ENCODE measurements at regions of chr11 and their contacts with region 1.

Region 1: DNA sequence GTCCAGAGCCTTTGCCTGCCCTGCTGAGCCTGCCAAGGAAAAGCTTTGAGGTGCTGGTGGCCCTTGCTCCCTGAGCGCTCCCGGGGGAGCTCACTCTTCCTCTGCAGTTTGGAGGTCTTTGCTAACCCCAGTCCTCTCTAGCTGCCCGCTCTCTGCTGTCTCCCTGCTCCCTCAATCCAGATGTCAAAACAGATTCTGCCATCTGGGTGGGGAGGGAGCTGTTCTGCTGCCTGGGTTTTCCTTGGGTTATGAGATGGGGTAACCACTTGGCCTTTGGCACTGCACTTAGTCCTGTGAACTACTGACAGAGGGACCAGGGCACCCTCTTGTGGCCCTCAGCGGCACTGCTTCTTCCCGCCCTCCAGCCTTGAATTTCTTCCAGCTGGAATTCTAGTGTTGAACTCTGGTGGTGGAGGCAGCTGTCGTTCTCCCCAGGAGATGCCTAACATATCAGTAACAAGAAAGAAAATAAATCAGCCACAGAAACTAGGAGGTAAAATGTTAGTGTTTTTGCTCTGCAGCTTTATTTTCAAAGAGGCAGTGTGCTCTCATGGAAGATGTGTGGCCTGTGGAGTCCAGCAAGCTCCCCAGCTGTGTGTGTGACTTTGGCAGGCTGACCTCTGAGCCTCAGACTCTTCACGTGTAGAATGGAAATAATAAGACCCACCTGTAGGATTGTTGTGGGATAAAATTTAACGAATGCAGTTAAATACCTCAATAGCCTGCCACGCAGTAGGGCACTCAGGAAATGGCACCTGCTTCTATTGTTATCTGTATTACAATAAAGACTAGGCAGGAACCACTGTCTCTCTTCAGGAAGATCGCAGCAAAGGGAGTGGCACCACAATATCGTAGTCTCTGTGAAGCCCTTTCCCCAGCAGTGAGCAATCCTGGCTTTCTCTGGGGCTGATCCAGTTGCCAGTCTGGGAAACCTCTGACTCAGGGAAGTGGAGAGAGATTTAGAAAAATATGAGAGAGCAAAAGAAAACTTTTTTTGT is 23.4 kb downstream of the ARFGAP2 start:
- DNase-seq: peak; percentile 34 to 64 (median 52)
- ATAC-seq: peak; percentile 80
- H3K4me3 ChIP-seq: peak overlapping the region; percentile 10
- H3K4me3 Mint-ChIP-seq: peak overlapping the region in 9 of 10 donors; percentile 60 to 84 (median 77)
- H3K27ac ChIP-seq: peak overlapping the region; percentile 21
- H3K27ac Mint-ChIP-seq: peak overlapping the region in 8 of 9 donors; percentile 81 to 97 (median 90)
- H3K4me1 ChIP-seq: peaks cover 25 to 40% of the 10 kb centered on the region in 2 donors
- H3K4me1 Mint-ChIP-seq: peaks cover 23 to 50% (median 36%) of the 10 kb centered on the region in 7 donors
- H3K27me3 ChIP-seq: no peaks in the 10 kb centered on the region
- H3K27me3 Mint-ChIP-seq: no peaks in the 10 kb centered on the region

Region 2: GRCh38 chr11:46889689-46890475 is 263.4 kb before region 1 on chr11:
- CTCF ChIA-PET with region 1: interaction called, 34 read pairs
- POLR2A ChIA-PET with region 1: no interaction called
- intact Hi-C with region 1: loop called (anchors 1 kb)
- DNase-seq: peak; percentile 40 to 80 (median 72)
- ATAC-seq: peak; percentile 95
- H3K4me3 ChIP-seq: no peak overlapping the region
- H3K4me3 Mint-ChIP-seq: no peak overlapping the region
- H3K27ac ChIP-seq: no peak overlapping the region
- H3K27ac Mint-ChIP-seq: no peak overlapping the region
- H3K4me1 ChIP-seq: no peaks in the 10 kb centered on the region
- H3K4me1 Mint-ChIP-seq: peaks cover 0 to 6% (median 0%) of the 10 kb centered on the region in 7 donors
- H3K27me3 ChIP-seq: no peaks in the 10 kb centered on the region
- H3K27me3 Mint-ChIP-seq: peaks cover 0 to 7% (median 0%) of the 10 kb centered on the region in 5 donors

Region 3: DNA sequence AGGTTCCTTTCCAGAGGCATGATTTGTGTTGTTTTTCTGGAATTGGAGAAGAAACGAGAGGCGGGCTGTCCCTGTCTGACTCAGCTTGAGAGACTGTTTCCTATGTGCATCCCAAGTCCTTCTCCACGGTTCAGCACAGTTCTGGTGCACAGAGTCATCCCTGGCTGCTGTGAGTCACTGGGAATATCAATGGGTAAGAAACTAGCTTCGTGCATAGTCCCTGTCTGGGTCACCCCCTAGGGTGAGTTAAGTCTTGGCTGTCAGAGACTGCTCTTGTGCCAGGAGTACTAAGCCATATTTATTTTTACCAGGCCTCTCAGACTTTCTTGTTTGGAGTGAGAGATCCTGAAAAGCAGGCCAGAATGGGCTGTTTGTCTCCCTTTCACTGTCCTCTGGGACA is 232.5 kb before region 1 on chr11:
- CTCF ChIA-PET with region 1: interaction called, 8 read pairs
- POLR2A ChIA-PET with region 1: interaction called, 3 read pairs
- intact Hi-C with region 1: loop called in 1 of 2 experiments (anchors 1 kb)
- DNase-seq: no peak
- ATAC-seq: no peak
- H3K4me3 ChIP-seq: no peak overlapping the region
- H3K4me3 Mint-ChIP-seq: no peak overlapping the region
- H3K27ac ChIP-seq: no peak overlapping the region
- H3K27ac Mint-ChIP-seq: no peak overlapping the region
- H3K4me1 ChIP-seq: peaks cover 13% of the 10 kb centered on the region in 2 donors
- H3K4me1 Mint-ChIP-seq: peaks cover 20 to 31% (median 25%) of the 10 kb centered on the region in 7 donors
- H3K27me3 ChIP-seq: peaks cover 4 to 18% of the 10 kb centered on the region in 2 donors
- H3K27me3 Mint-ChIP-seq: peaks cover 30 to 49% (median 36%) of the 10 kb centered on the region in 5 donors

Region 4: DNA sequence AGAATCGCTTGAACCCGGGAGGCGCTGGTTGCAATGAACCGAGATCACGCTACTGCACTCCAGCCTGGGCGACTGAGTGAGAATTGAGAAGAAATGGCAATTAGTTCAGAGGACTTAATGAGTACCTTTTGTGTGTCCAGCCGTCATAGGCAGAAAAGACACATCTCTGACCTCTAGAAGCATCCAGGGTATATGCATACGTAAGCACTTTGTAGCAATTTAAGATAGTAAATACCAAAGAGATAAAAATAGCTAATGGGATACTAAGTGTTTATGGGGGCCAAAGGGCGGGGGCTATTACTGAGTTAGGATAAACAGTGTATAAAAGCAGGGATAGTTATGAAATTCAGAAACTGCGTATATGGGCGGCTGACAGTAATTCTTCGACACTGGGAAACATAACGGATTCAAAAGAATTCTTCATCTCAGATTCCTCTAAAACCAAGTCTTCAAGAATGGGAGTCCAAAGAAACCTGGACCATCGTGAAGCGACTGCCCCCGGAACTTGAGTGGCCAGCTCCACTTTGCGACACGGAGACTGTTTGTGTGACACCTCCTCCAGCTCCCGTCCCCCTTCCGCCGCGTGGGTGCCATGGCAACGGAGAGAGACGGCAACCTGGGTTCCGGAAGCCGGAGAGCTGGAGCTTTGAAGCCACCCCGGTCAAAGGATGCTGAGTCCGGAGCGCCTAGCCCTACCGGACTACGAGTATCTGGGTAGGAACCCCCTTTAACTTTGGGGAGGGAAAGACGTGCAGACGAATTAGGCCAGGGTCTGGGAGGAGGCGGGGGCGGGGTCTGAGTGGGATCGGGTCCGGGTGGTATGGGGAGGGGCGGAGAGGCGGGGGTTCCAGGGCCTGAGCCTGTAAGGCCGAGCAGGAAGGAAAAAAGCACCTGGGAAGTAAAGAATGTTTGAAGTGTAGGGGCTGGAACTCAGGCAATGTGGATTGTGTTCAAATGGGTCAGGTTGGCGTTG is 216.8 kb before region 1 on chr11 and contains the start of gene CSTPP1:
- CTCF ChIA-PET with region 1: interaction called, 7 read pairs
- POLR2A ChIA-PET with region 1: interaction called, 7 read pairs
- intact Hi-C with region 1: loop called in 1 of 2 experiments (anchors 1 kb)
- DNase-seq: peak; percentile 80 to 92 (median 89)
- ATAC-seq: peak; percentile 99
- H3K4me3 ChIP-seq: peak within 1 kb of the TSS; percentile 76
- H3K4me3 Mint-ChIP-seq: peak within 1 kb of the TSS; percentile 86 to 100 (median 92)
- H3K27ac ChIP-seq: peak within 1 kb of the TSS; percentile 72
- H3K27ac Mint-ChIP-seq: peak within 1 kb of the TSS; percentile 89 to 98 (median 92)
- H3K4me1 ChIP-seq: peaks cover 0 to 11% of the 10 kb centered on the region in 2 donors
- H3K4me1 Mint-ChIP-seq: peaks cover 5 to 24% (median 21%) of the 10 kb centered on the region in 7 donors
- H3K27me3 ChIP-seq: no peaks in the 10 kb centered on the region
- H3K27me3 Mint-ChIP-seq: peaks cover 8 to 19% (median 9%) of the 10 kb centered on the region in 5 donors
- total RNA-seq, gene CSTPP1: 9.3 to 18.6 (median 16.1) TPM

Region 5: DNA sequence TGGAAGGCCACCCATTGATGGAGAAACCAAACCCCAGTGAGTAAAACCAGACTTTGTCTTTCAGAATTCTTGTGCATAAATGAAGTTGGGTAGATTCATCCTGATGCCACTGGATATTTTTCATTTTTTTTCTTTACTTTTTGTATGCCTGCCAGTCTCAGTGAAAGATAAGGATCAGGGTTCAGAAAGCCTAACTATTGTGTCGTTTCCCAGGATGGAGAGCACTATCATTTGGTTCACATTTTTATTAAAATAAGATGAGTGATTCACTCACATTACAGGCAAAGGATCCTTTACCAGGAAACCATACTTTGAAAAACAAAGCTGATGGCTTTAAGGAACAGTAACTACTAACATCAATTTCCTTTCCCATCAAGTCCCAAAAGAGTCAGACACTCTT is 28.6 kb before region 1 on chr11:
- CTCF ChIA-PET with region 1: no interaction called
- POLR2A ChIA-PET with region 1: no interaction called
- intact Hi-C with region 1: loop called in 1 of 2 experiments (anchors 1 kb)
- DNase-seq: no peak
- ATAC-seq: no peak
- H3K4me3 ChIP-seq: no peak overlapping the region
- H3K4me3 Mint-ChIP-seq: no peak overlapping the region
- H3K27ac ChIP-seq: no peak overlapping the region
- H3K27ac Mint-ChIP-seq: no peak overlapping the region
- H3K4me1 ChIP-seq: no peaks in the 10 kb centered on the region
- H3K4me1 Mint-ChIP-seq: peaks cover 0 to 4% (median 0%) of the 10 kb centered on the region in 7 donors
- H3K27me3 ChIP-seq: no peaks in the 10 kb centered on the region
- H3K27me3 Mint-ChIP-seq: no peaks in the 10 kb centered on the region

Region 6: GRCh38 chr11:47208628-47209027 is 55.4 kb after region 1 on chr11:
- CTCF ChIA-PET with region 1: no interaction called
- POLR2A ChIA-PET with region 1: no interaction called
- intact Hi-C with region 1: no loop called
- DNase-seq: no peak
- ATAC-seq: no peak
- H3K4me3 ChIP-seq: no peak overlapping the region
- H3K4me3 Mint-ChIP-seq: no peak overlapping the region
- H3K27ac ChIP-seq: no peak overlapping the region
- H3K27ac Mint-ChIP-seq: no peak overlapping the region
- H3K4me1 ChIP-seq: no peaks in the 10 kb centered on the region
- H3K4me1 Mint-ChIP-seq: peaks cover 0 to 3% (median 0%) of the 10 kb centered on the region in 7 donors
- H3K27me3 ChIP-seq: no peaks in the 10 kb centered on the region
- H3K27me3 Mint-ChIP-seq: peaks cover 0 to 11% (median 0%) of the 10 kb centered on the region in 5 donors

Measured in naive thymus-derived CD4-positive, alpha-beta T cell (primary cell).